ENCODE measurements at regions of chr1 and their contacts with region 1.

Region 1: DNA sequence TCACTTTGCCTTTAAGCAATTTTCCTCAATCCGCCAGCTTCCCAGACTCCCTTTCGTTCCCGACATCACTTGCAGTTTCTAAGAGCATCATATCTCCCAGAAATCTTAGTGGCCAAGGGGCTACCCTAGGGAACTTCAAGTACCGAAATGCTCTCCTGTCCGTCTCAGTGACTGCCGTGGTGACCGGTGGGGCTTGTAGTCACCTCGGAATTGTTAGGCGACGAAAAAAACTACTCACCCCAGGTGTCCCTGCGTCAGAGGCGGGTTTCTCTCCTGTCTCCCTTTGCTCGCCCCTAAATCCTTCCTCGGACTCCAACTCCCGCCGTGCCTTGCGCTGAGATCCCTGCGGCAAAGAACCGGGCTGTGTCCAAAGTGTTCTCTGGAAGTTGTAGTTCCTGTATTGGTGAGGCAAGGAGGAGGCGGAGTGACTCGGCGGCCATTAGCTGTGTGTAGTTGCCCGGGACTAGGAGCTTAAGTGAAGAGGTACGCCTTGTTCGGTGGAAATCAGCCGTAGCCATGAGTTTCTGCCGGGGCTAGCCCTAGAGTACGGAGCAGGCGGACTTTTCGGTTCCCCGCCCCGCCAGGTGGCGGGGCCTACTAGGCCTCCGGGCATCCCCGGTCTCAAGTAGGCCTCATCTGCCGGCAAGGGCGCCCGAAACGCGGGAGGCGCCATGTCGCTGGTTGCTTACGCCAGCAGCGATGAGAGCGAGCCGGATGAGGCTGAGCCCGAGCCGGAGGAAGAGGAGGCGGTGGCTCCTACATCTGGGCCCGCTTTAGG is at the start of gene PRCC:
- DNase-seq: peak; percentile 93 to 99 (median 99)
- H3K4me3 ChIP-seq: peak within 1 kb of the TSS; percentile 85
- H3K4me3 Mint-ChIP-seq: no peak within 1 kb of the TSS
- H3K27ac ChIP-seq: peak within 1 kb of the TSS; percentile 97
- H3K27ac Mint-ChIP-seq: peak within 1 kb of the TSS in 2 of 8 donors; percentile 85 to 96
- H3K4me1 ChIP-seq: peaks cover 42% of the 10 kb centered on the region
- H3K4me1 Mint-ChIP-seq: peaks cover 28 to 46% (median 37%) of the 10 kb centered on the region in 3 donors
- H3K27me3 ChIP-seq: no peaks in the 10 kb centered on the region
- H3K27me3 Mint-ChIP-seq: peaks cover 0 to 1% of the 10 kb centered on the region in 2 donors
- total RNA-seq, gene PRCC: 106 to 111 TPM

Region 2: GRCh38 chr1:156740679-156741612 is 26.3 kb before region 1 on chr1 and contains the start of gene MRPL24:
- CTCF ChIA-PET with region 1: interaction called, 12 read pairs
- POLR2A ChIA-PET with region 1: interaction called, 42 read pairs
- DNase-seq: peak; percentile 90 to 99 (median 97)
- H3K4me3 ChIP-seq: peak within 1 kb of the TSS; percentile 76
- H3K4me3 Mint-ChIP-seq: peak within 1 kb of the TSS; percentile 93 to 97 (median 94)
- H3K27ac ChIP-seq: peak within 1 kb of the TSS; percentile 62
- H3K27ac Mint-ChIP-seq: peak within 1 kb of the TSS; percentile 92 to 99 (median 98)
- H3K4me1 ChIP-seq: peaks cover 30% of the 10 kb centered on the region
- H3K4me1 Mint-ChIP-seq: peaks cover 27 to 41% (median 41%) of the 10 kb centered on the region in 3 donors
- H3K27me3 ChIP-seq: no peaks in the 10 kb centered on the region
- H3K27me3 Mint-ChIP-seq: no peaks in the 10 kb centered on the region
- total RNA-seq, gene MRPL24: 122 to 131 TPM